ENCODE measurements at regions of chr10 and their contacts with region 1.

Region 1: DNA sequence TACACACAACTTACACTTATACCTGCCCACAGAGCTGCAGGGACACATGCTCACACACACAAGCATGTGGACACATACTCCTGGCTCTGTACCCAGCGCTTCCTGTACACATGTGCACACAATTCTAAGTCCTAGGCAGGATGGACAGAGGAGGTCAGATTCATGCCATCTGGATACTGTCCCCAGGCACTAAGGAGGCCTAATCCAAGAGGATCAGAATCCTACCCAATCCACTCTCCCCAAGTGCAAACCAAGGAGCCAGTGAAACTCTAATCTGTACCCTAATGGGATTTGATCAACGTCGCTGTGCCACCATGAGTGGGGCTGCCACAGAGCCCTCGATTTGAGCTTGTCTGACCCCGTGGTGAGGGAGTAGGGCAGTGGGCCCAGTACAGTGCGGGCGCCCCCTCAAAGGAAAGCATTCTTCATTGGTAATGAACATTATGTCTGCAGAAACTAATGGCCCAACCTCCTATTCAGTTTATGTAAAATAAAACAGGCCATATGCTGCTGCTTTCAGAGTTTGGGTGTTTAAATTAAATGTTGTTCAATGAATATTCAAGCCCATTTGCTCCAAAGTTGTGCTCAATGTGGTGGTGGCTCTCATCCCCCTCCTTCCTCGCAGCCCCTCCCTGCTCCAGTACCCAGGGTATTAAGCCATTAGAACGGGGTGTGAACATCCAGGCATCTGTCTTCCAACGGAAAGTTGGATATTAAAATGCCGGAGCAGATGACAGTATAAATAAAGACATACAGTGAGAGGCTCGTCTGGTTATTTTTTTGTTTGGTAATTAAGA is 26.4 kb downstream of the RPS24 start:
- DNase-seq: no peak
- H3K4me3 Mint-ChIP-seq: no peak overlapping the region
- H3K27ac Mint-ChIP-seq: no peak overlapping the region
- H3K4me1 Mint-ChIP-seq: peaks cover 10% of the 10 kb centered on the region
- H3K27me3 Mint-ChIP-seq: no peaks in the 10 kb centered on the region

Region 2: GRCh38 chr10:78165617-78166016 is 105.5 kb after region 1 on chr10:
- intact Hi-C with region 1: no loop called
- DNase-seq: no peak
- H3K4me3 Mint-ChIP-seq: no peak overlapping the region
- H3K27ac Mint-ChIP-seq: no peak overlapping the region
- H3K4me1 Mint-ChIP-seq: no peaks in the 10 kb centered on the region
- H3K27me3 Mint-ChIP-seq: no peaks in the 10 kb centered on the region

Region 3: GRCh38 chr10:78931321-78932053 is 871.4 kb after region 1 on chr10:
- intact Hi-C with region 1: loop called (anchors 5 kb)
- DNase-seq: no peak
- H3K4me3 Mint-ChIP-seq: no peak overlapping the region
- H3K27ac Mint-ChIP-seq: no peak overlapping the region
- H3K4me1 Mint-ChIP-seq: no peaks in the 10 kb centered on the region
- H3K27me3 Mint-ChIP-seq: peaks cover 9% of the 10 kb centered on the region

Measured in activated T-helper 1 cell treated with anti-CD3 and anti-CD28 coated beads, Interleukin-12 subunit alpha, Interleukin-12 subunit beta, Interleukin-2, Interleukin-4 antibody, amounts not matched to agents 30 ng/mL and 10 ng/mL and 1 ng/mL, durations not matched to agents 14 hours and 24 hours and 36 hours (primary cell).